Activated CD4-positive, alpha-beta memory T cell treated with anti-CD3 and anti-CD28 coated beads, Interleukin-2, amount 10 ng/mL, durations not matched to agents 7 days and 5 days (primary cell): ENCODE measurements at regions of chr6 and their contacts with region 1.

Region 1: DNA sequence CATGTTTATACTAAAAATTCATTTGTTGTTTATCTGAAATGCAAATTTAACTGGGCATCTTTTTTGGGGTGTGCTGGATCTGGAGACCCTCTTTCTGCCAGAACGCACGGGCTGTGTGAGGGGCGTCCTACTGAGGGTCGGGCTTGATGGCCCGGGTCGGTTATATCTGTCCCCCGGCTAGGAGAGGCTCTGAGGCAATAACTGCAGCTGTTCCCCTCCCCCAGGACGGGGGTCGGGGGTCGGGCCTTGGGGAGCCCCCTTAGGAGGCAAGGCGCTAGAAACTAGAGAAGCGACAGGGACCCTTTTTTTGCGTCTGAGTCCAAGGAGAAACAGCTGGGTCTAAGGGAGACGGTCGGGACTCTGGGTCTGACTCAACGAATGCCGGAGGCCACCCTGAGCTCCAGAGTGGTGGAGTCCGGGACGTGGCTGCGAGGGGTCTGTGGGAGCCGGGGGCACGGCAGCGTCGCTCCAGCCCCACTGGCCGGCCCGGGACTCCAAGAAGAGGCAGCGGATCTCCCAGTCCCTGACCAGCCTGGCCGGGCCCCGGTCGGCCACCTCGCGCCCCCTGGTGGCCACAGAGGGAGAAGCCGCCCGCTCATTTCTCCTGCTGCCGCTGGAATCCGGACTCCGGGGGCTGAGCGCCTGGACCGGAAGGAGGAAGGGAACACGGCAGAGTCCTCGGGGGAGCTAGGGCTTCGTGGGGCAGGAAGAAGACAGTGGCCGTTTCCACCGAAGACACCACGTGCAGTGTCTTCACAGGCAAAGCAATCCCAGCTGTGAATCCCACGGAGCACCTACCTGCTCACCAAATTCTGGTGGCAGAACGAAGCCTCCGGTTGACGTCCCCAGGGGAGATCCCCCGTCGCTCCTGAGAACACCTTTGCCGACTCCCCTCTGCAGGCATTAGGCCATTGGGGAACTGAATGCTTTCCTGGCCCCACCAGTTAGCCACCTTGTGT is 24.0 kb upstream of the SCML4 start:
- DNase-seq: peak; percentile 78
- H3K4me3 Mint-ChIP-seq: peak overlapping the region; percentile 67
- H3K27ac Mint-ChIP-seq: no peak overlapping the region
- H3K4me1 Mint-ChIP-seq: peaks cover 14% of the 10 kb centered on the region
- H3K27me3 Mint-ChIP-seq: peaks cover 15% of the 10 kb centered on the region

Region 2: DNA sequence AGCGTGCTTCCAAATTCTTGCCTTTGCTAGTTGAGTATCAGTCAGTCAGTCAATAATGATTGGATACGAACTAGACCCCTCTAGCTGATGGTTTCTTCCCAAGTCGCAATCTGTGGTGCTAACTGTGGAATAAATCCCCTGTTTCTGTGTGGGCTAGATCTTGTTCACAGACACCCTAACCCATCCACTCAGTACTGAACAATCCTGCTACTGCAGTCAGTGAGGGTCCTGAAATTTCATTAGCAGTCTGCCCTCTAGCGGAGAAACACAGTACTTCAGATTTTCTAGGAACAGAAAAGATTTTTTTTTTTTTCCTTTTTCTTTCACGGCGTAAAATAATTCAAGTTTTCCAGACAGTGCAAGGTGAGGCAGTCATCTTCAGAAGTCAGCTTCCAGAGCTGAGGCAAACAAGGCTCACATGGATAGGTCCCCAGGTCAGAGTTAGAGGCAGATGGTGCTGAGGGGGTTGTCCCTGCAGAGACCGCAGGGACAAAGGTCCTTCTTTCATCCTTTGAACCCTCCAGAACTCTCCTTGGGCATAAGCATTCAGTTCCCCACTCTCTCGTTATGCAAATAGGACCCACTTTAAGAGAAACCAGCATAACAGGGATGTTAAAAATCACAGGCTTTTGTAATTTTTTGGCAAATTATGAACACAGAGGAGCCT is 143.6 kb before region 1 on chr6:
- CTCF ChIA-PET with region 1: interaction called, 13 read pairs
- POLR2A ChIA-PET with region 1: no interaction called
- DNase-seq: no peak
- H3K4me3 Mint-ChIP-seq: no peak overlapping the region
- H3K27ac Mint-ChIP-seq: no peak overlapping the region
- H3K4me1 Mint-ChIP-seq: peaks cover 14% of the 10 kb centered on the region
- H3K27me3 Mint-ChIP-seq: no peaks in the 10 kb centered on the region

Region 3: DNA sequence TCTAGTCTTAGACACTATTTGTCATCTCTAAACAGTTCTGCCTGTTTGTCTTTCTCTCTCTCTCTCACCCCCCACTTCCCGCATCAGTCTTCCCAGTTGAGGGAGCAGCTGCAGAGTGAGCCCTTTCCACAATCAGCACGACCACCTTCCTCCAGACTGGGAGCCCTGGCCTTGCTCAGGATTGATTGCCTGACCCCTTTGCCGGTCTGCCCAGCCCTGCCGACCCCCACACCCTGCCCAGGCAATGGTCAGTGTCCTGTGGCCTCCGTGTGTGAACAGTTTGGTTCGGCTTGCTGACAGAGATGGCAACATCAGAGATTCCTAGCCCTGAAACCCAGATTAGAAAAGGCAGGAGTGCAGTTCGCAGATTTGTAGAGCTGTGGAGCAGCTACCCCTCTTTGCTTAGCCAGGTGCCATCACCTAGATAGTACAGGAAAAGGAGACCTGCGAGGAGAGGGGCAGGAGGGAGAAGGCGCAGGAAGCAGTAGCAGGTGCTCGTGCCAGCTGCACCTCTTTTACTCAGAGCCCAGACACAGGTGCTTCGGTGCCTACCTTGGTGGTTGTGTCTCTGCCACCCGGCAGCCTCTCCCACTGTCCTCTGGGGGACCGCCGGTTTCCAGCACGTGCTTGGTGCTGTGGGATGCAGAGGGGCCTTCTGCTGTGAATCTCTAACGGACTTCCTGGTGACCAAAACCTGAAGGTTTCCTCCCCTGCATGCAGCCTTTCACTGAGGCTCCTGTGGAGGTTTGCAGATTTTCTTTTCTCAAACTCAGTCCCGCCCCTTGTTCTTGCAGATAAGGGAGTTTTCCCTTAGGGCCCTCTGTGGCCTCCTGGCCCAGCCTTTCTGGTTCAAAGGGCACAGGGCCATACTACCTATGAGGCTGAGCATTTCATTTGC is 116.5 kb before region 1 on chr6:
- CTCF ChIA-PET with region 1: interaction called, 51 read pairs
- POLR2A ChIA-PET with region 1: interaction called, 14 read pairs
- DNase-seq: no peak
- H3K4me3 Mint-ChIP-seq: peak overlapping the region; percentile 74
- H3K27ac Mint-ChIP-seq: peak overlapping the region; percentile 48
- H3K4me1 Mint-ChIP-seq: peaks cover 66% of the 10 kb centered on the region
- H3K27me3 Mint-ChIP-seq: peaks cover 25% of the 10 kb centered on the region

Region 4: GRCh38 chr6:107820338-107821261 is 27.5 kb before region 1 on chr6:
- CTCF ChIA-PET with region 1: interaction called, 62 read pairs
- POLR2A ChIA-PET with region 1: interaction called, 13 read pairs
- DNase-seq: peak; percentile 39
- H3K4me3 Mint-ChIP-seq: peak overlapping the region; percentile 75
- H3K27ac Mint-ChIP-seq: peak overlapping the region; percentile 80
- H3K4me1 Mint-ChIP-seq: peaks cover 67% of the 10 kb centered on the region
- H3K27me3 Mint-ChIP-seq: no peaks in the 10 kb centered on the region

Region 5: GRCh38 chr6:107866606-107867301 is 18.6 kb after region 1 on chr6:
- CTCF ChIA-PET with region 1: interaction called, 13 read pairs
- POLR2A ChIA-PET with region 1: no interaction called
- DNase-seq: no peak
- H3K4me3 Mint-ChIP-seq: no peak overlapping the region
- H3K27ac Mint-ChIP-seq: no peak overlapping the region
- H3K4me1 Mint-ChIP-seq: peaks cover 2% of the 10 kb centered on the region
- H3K27me3 Mint-ChIP-seq: no peaks in the 10 kb centered on the region